ENCODE measurements at regions of chr6 and their contacts with region 1.

Region 1: DNA sequence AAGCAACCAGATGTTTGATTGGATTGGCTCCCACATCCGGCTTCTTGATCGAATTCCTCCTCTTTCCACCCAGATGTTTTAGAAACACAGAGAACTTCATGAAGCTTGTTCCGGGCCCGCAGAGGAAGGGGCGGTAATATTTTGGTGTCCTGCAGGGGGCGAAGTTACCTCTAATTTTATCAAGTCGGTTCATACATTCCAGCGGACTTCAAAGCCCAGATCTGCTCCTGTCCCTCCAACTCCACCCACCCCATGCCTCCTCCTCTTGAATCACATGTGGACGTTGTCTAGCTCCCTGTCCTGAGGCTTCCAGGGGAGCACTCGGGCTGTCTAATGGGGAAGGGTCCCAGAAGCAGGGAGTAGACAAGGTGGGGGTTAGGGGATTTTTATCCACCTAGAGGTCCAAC is 2.9 kb upstream of the BMP6 start:
- DNase-seq: peak; percentile 88

Region 2: GRCh38 chr6:7300926-7301325 is 422.1 kb before region 1 on chr6:
- intact Hi-C with region 1: no loop called
- DNase-seq: no peak

Region 3: GRCh38 chr6:7697820-7698623 is 25.0 kb before region 1 on chr6:
- intact Hi-C with region 1: no loop called
- DNase-seq: peak; percentile 85

Region 4: GRCh38 chr6:8000188-8000596 is 277.1 kb after region 1 on chr6:
- intact Hi-C with region 1: loop called (anchors 5 kb)
- DNase-seq: no peak

Measured in cardiac septum (tissue), 1 donor.